Caco-2 (cell line): ENCODE measurements at regions of chr1 and their contacts with region 1.

Region 1: DNA sequence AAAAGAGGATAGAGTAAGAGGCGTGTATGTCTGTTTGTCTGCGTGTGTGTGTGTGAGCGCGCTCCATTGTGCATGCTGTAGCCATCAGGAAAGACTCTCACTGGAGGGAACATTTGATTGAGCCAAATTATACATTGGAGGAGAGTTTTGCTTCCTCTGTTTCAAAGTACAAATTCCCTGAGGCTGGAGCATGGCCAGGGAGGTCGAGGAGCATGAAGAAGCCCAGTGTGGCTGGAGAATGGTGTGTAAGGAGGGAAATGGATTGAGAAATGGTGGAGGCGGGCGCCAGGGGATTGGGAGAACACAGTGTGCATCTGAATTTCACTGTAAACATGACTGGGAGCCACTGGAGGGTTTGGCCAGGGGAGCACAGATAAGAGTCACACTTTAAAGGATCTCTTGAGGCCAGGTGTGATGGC is 22.1 kb upstream of the EFNA1 start:
- DNase-seq: peak in 1 of 2 experiments; percentile 34
- H3K4me3 ChIP-seq: no peak overlapping the region
- H3K4me3 Mint-ChIP-seq: no peak overlapping the region
- H3K27ac Mint-ChIP-seq: peak overlapping the region; percentile 0
- H3K4me1 ChIP-seq: peaks cover 28% of the 10 kb centered on the region
- H3K4me1 Mint-ChIP-seq: peaks cover 10% of the 10 kb centered on the region
- H3K27me3 ChIP-seq: no peaks in the 10 kb centered on the region
- H3K27me3 Mint-ChIP-seq: no peaks in the 10 kb centered on the region
- CTCF ChIP-seq: no peak

Region 2: DNA sequence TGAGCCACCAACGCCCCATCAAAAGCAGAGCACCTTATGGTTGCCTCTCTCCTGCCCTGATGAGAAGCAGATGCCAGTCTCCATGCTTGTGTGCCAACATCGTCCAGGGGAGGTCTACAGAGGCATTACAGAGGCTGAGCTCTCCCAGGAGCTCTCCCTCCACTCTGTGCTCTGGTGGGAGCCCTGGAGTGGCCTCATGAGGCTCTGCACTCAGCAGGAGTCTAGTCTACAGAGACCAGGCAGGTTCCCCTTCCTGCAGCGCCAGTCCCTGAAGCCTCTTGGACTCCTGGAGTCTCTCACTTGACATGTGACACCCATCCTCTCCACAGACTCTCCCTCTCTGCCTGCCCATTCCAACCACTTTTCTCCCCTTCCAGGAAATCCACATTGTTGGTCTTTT is 68.6 kb before region 1 on chr1:
- CTCF ChIA-PET with region 1: interaction called, 10 read pairs
- POLR2A ChIA-PET with region 1: no interaction called
- intact Hi-C with region 1: no loop called
- DNase-seq: no peak
- H3K4me3 ChIP-seq: no peak overlapping the region
- H3K4me3 Mint-ChIP-seq: no peak overlapping the region
- H3K27ac Mint-ChIP-seq: no peak overlapping the region
- H3K4me1 ChIP-seq: no peaks in the 10 kb centered on the region
- H3K4me1 Mint-ChIP-seq: peaks cover 10% of the 10 kb centered on the region
- H3K27me3 ChIP-seq: no peaks in the 10 kb centered on the region
- H3K27me3 Mint-ChIP-seq: peaks cover 4% of the 10 kb centered on the region
- CTCF ChIP-seq: no peak

Region 3: DNA sequence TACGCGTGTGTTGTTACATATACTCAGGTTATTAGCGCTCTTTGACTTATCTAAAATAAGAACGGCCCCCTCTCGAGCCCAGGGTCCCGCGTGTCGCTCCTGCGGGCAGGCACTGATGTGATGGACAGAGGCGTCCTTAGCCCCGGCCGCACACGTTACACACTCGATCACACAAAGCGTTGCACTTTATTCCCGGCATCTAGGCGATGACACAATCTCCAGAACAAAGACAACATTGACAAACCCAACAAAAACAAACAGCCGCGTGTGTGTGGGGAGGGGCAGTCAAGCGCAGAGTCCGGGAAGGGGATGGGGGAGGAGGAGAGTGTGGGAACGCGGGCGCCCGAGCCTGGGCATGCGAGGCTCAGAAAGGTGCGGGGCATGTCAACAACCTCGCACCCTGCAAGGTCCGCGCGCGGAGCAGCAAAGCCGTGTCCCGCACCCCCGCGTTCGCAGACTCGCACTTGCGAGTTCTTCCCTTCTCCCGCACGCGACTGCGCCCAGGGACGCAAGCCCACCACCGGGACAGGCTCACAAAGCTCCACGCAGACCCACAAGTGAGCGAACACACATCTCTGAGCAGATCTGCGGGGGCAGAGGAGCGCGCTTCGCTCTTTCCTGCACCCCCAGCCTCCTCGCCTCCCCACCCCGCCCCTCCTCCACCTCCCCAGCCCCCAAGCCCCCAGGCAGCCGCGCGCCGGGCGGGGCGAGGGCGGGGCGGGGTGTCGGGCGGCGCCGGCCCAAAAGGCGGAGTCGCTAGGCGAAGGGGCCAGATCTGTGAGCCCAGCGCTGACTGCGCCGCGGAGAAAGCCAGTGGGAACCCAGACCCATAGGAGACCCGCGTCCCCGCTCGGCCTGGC is 21.7 kb after region 1 on chr1 and contains the start of gene EFNA1:
- CTCF ChIA-PET with region 1: interaction called, 4 read pairs
- POLR2A ChIA-PET with region 1: no interaction called
- intact Hi-C with region 1: loop called (anchors 1 kb)
- DNase-seq: peak; percentile 82
- H3K4me3 ChIP-seq: peak within 1 kb of the TSS; percentile 68
- H3K4me3 Mint-ChIP-seq: peak within 1 kb of the TSS; percentile 89
- H3K27ac Mint-ChIP-seq: peak within 1 kb of the TSS; percentile 80
- H3K4me1 ChIP-seq: peaks cover 53% of the 10 kb centered on the region
- H3K4me1 Mint-ChIP-seq: peaks cover 42% of the 10 kb centered on the region
- H3K27me3 ChIP-seq: no peaks in the 10 kb centered on the region
- H3K27me3 Mint-ChIP-seq: no peaks in the 10 kb centered on the region
- CTCF ChIP-seq: no peak
- total RNA-seq, gene EFNA1: 42.5 and 47.9 TPM in 2 replicates

Region 4: GRCh38 chr1:155236441-155236840 is 130.8 kb after region 1 on chr1:
- CTCF ChIA-PET with region 1: no interaction called
- POLR2A ChIA-PET with region 1: no interaction called
- intact Hi-C with region 1: no loop called
- DNase-seq: no peak
- H3K4me3 ChIP-seq: no peak overlapping the region
- H3K4me3 Mint-ChIP-seq: no peak overlapping the region
- H3K27ac Mint-ChIP-seq: no peak overlapping the region
- H3K4me1 ChIP-seq: no peaks in the 10 kb centered on the region
- H3K4me1 Mint-ChIP-seq: peaks cover 10% of the 10 kb centered on the region
- H3K27me3 ChIP-seq: no peaks in the 10 kb centered on the region
- H3K27me3 Mint-ChIP-seq: no peaks in the 10 kb centered on the region
- CTCF ChIP-seq: no peak